Dorsolateral prefrontal cortex (tissue), 120 donors: ENCODE measurements at regions of chr13 and their contacts with region 1.

Region 1: DNA sequence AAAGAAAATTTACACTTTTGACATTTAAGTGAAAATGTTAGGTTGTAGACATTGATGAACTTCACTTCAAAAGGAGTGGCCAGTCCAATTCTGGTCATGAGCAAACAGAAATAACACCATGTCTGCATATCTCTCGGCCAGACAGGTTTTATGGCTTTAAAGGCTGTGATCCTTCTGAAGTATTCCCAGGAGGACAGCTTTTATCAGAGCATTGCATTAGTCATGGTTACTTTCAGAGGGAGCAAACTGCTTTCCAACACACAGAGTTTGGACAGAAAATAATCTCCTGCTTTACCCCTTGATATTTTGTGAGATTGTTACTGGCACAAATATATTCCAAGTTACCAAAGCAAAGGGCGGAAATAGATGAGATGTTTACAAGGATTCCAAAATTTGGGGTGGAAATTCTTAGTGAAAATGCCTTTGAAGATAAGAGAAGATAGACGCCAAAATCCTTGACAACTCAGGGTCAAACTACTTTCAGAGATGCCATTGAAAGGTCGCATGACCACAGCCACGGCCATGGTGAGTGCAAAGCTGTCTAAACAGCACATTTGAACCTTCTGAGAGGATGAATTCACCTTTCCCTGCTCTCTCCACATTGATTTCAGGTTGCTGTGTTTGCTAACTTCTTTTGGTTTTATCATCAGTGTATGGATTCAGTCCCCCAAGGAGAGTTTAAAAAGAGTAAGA is 584.5 kb upstream of the SGCG start:
- DNase-seq: no peak
- H3K4me3 ChIP-seq: no peak overlapping the region
- H3K27ac ChIP-seq: no peak overlapping the region
- H3K27me3 ChIP-seq: peaks cover 0 to 12% (median 0%) of the 10 kb centered on the region in 45 donors
- CTCF ChIP-seq: no peak

Region 2: DNA sequence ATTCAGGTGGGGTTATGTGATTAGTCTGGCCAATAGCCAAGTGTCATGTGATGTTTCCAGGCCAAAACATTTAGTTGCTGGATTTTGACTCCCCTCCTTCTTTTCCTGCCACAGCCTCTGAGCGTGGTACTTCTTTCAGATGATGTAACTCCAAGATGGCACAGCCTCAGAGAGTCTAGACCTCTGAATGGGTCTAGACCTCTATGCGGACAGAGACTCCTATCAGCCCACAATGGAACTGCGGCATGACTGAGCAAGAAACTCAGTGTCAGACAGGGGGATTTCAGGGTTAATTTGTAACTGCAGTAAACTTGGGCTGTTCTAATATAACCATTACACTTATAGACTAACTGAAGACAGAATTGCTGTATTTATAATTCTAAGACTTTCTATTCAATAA is 1094.6 kb before region 1 on chr13:
- intact Hi-C with region 1: no loop called
- DNase-seq: no peak
- H3K4me3 ChIP-seq: no peak overlapping the region
- H3K27ac ChIP-seq: no peak overlapping the region
- H3K27me3 ChIP-seq: no peaks in the 10 kb centered on the region
- CTCF ChIP-seq: no peak

Region 3: GRCh38 chr13:22839603-22840530 is 243.6 kb after region 1 on chr13:
- intact Hi-C with region 1: loop called in 1 of 2 experiments (anchors 5 kb)
- DNase-seq: no peak
- H3K4me3 ChIP-seq: no peak overlapping the region
- H3K27ac ChIP-seq: no peak overlapping the region
- H3K27me3 ChIP-seq: peaks cover 0 to 13% (median 0%) of the 10 kb centered on the region in 45 donors
- CTCF ChIP-seq: no peak

Region 4: GRCh38 chr13:22874839-22875238 is 278.5 kb after region 1 on chr13:
- intact Hi-C with region 1: no loop called
- DNase-seq: no peak
- H3K4me3 ChIP-seq: no peak overlapping the region
- H3K27ac ChIP-seq: no peak overlapping the region
- H3K27me3 ChIP-seq: no peaks in the 10 kb centered on the region
- CTCF ChIP-seq: no peak